ENCODE measurements at regions of chr17 and their contacts with region 1.

Region 1: DNA sequence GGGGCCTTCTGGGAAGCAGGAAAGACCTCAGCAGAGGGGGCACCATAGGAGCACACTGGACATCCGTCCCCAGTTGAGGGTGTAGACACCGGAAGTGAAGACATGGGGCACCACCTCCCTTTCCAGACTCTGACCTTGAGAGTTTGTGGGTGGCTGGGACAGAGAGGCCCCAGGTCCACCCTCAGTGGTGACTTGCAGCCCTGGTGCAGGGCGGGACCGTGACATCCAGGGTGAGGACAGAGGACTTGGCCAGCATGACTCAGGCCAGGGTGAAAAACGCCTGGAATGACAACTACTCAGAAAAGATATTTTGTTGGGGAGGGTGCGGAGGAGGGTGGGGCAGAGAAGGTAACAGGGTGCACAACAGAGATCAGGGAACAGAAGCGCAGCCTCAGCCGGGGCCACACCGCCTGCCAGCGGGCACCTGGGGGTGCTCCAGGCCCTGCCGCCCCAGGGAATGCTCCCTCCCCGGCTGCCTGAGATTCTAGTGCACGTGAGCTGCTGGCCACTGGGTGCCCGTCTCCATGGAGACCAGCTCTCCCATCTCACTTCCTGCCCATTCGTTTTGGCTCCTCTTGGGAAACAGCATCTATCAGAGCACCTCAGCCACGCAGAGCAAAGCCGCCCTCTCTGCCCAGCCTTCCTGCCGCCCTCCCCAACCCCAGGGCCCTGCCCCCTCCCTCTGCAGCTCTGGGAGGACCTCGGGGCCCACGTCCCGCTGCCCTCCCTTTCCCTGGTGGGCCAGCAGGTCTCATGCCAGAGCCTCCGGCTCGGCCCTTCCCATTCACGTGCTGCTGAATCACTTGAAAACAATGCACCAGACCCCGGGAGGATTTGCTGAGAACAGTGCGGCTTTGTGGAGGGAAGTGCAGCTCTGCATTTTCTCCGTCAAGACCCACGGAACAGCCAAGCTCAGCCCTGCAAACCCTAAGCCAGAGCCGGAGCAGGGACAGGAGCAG is 19.6 kb downstream of the CEP295NL start:
- DNase-seq: peak; percentile 95
- ATAC-seq: peak; percentile 81
- H3K4me3 ChIP-seq: peak overlapping the region; percentile 47
- H3K27ac ChIP-seq: peak overlapping the region; percentile 84
- H3K4me1 ChIP-seq: peaks cover 42% of the 10 kb centered on the region
- H3K27me3 ChIP-seq: no peaks in the 10 kb centered on the region
- CTCF ChIP-seq: no peak

Region 2: GRCh38 chr17:78693346-78694083 is 189.9 kb before region 1 on chr17:
- CTCF ChIA-PET with region 1: no interaction called
- POLR2A ChIA-PET with region 1: interaction called, 13 read pairs
- intact Hi-C with region 1: no loop called
- DNase-seq: no peak
- ATAC-seq: no peak
- H3K4me3 ChIP-seq: no peak overlapping the region
- H3K27ac ChIP-seq: no peak overlapping the region
- H3K4me1 ChIP-seq: no peaks in the 10 kb centered on the region
- H3K27me3 ChIP-seq: no peaks in the 10 kb centered on the region
- CTCF ChIP-seq: no peak

Region 3: DNA sequence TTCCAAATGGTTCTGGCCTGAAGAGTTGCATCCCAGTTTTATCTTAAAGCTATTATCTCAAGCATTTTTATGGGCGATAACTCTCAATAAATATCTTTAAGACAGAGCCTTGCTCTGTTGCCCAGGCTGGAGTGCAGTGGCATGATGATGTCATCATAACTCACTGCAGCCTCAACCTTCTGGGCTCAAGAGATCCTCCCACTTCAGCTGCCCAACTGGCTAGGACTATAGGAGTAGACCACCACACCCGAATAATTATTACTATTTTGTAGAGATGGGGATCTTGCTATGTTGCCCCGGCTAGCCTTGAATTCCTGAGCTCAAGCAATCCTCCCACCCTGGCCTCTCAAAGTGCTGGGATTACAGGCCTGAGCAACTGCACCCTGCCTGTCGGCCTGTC is 75.3 kb before region 1 on chr17:
- CTCF ChIA-PET with region 1: no interaction called
- POLR2A ChIA-PET with region 1: no interaction called
- intact Hi-C with region 1: no loop called
- DNase-seq: peak; percentile 54
- ATAC-seq: peak; percentile 79
- H3K4me3 ChIP-seq: no peak overlapping the region
- H3K27ac ChIP-seq: no peak overlapping the region
- H3K4me1 ChIP-seq: no peaks in the 10 kb centered on the region
- H3K27me3 ChIP-seq: no peaks in the 10 kb centered on the region
- CTCF ChIP-seq: no peak

Region 4: GRCh38 chr17:78822552-78822951 is 60.9 kb before region 1 on chr17:
- CTCF ChIA-PET with region 1: no interaction called
- POLR2A ChIA-PET with region 1: no interaction called
- intact Hi-C with region 1: no loop called
- DNase-seq: no peak
- ATAC-seq: no peak
- H3K4me3 ChIP-seq: no peak overlapping the region
- H3K27ac ChIP-seq: no peak overlapping the region
- H3K4me1 ChIP-seq: no peaks in the 10 kb centered on the region
- H3K27me3 ChIP-seq: no peaks in the 10 kb centered on the region
- CTCF ChIP-seq: no peak

Region 5: GRCh38 chr17:78899361-78900260 is 16.2 kb after region 1 on chr17:
- CTCF ChIA-PET with region 1: no interaction called
- POLR2A ChIA-PET with region 1: no interaction called
- intact Hi-C with region 1: no loop called
- DNase-seq: no peak
- ATAC-seq: no peak
- H3K4me3 ChIP-seq: no peak overlapping the region
- H3K27ac ChIP-seq: no peak overlapping the region
- H3K4me1 ChIP-seq: no peaks in the 10 kb centered on the region
- H3K27me3 ChIP-seq: no peaks in the 10 kb centered on the region
- CTCF ChIP-seq: no peak

Region 6: GRCh38 chr17:78925234-78925633 is 41.8 kb after region 1 on chr17 and contains the start of gene TIMP2:
- CTCF ChIA-PET with region 1: no interaction called
- POLR2A ChIA-PET with region 1: interaction called, 31 read pairs
- intact Hi-C with region 1: loop called (anchors 2 kb)
- DNase-seq: peak; percentile 86
- ATAC-seq: peak; percentile 56
- H3K4me3 ChIP-seq: peak within 1 kb of the TSS; percentile 85
- H3K27ac ChIP-seq: no peak within 1 kb of the TSS
- H3K4me1 ChIP-seq: peaks cover 17% of the 10 kb centered on the region
- H3K27me3 ChIP-seq: no peaks in the 10 kb centered on the region
- CTCF ChIP-seq: no peak
- total RNA-seq, gene TIMP2: 60.1 and 62.5 TPM in 2 replicates

Measured in PC-3 (cell line).